ENCODE measurements at regions of chr7 and their contacts with region 1.

Region 1: DNA sequence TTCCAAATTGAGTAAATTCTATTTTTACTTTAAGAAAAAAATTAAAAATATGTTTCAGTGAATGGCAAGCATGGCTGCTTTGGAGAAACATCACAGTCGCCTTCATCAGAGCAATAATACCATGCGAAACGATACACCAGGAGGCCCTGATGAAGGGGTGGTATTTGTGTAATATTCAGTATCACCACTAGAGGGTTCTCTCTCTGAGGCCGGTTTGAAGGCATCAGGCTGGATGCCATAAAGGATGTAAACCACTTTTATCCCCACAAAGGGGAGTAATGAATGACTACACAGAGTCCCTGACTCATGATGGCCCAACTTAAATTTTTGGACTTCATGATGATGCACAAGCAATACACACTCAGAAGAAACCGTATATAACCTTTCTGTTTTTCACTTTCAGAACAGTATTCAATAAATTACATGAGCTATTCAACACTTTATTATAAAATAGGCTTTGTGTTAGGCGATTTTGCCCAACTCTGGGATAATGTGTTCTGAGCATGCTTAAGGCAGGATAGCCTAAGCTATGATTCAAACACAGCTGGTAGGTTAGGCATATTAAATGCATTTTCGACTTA is 95.5 kb downstream of the PPP1R17 start:
- DNase-seq: peak in 1 of 3 donors; percentile 9
- ATAC-seq: peak; percentile 47 to 68
- H3K4me3 ChIP-seq: no peak overlapping the region
- H3K27ac ChIP-seq: no peak overlapping the region
- H3K4me1 ChIP-seq: peaks cover 2% of the 10 kb centered on the region
- H3K27me3 ChIP-seq: no peaks in the 10 kb centered on the region

Region 2: GRCh38 chr7:32164346-32164957 is 382.0 kb after region 1 on chr7:
- intact Hi-C with region 1: loop called in 1 of 4 experiments (anchors 10 kb)
- DNase-seq: no peak
- ATAC-seq: peak; percentile 61 to 67
- H3K4me3 ChIP-seq: no peak overlapping the region
- H3K27ac ChIP-seq: no peak overlapping the region
- H3K4me1 ChIP-seq: peaks cover 8% of the 10 kb centered on the region
- H3K27me3 ChIP-seq: no peaks in the 10 kb centered on the region